ENCODE measurements at regions of chr1 and their contacts with region 1.

Region 1: DNA sequence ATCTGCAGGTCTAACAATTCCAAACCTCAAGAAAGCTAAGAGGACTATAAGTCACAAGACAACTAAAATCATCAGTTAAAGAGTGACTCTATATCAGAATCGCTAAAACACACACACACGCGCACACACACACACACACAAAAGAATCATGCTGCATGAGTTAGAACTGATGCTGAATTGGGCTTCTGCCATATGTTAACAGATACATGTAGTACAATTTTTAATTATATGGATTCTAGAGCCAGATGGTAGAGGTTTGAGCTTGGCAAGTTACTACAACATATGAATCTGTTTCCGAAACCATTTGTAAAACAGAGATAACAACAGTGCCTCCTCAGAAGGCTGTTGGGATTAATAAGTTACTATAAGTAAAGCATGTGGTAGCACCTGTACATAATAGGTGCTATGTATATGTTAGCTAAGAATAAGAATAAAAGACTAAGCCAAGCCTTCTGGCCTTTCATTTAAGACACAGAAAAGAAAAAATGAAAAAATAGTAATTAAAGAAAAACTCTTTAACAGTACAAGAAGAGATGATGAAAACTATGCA is 17.9 kb downstream of the EPRS1 start:
- DNase-seq: no peak
- H3K4me3 ChIP-seq: no peak overlapping the region
- H3K27ac ChIP-seq: no peak overlapping the region
- H3K4me1 ChIP-seq: no peaks in the 10 kb centered on the region
- H3K27me3 ChIP-seq: no peaks in the 10 kb centered on the region
- CTCF ChIP-seq: no peak

Region 2: GRCh38 chr1:219973213-219973612 is 55.2 kb before region 1 on chr1:
- CTCF ChIA-PET with region 1: no interaction called
- POLR2A ChIA-PET with region 1: no interaction called
- intact Hi-C with region 1: loop called (anchors 5 kb)
- DNase-seq: no peak
- H3K4me3 ChIP-seq: no peak overlapping the region
- H3K27ac ChIP-seq: no peak overlapping the region
- H3K4me1 ChIP-seq: no peaks in the 10 kb centered on the region
- H3K27me3 ChIP-seq: no peaks in the 10 kb centered on the region
- CTCF ChIP-seq: no peak

Region 3: DNA sequence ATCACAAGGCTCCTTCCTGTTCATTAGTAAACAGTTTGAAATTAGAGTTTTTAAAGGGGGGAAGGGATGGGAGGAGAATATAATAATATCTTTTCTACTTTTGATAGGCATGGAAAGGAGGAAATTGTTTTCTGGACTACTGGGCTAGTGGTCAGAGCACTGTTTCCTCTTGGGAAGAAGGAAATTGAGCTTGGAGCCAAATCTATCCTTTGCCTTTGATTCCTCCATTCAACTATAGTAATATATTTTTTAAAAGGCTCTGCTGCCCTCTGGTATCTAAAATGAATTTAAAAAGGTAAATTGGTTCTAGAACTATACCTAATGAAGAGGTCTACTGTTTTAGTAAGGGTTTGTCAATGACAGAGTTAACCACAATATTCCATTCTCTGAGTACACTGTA is 71.4 kb after region 1 on chr1:
- CTCF ChIA-PET with region 1: no interaction called
- POLR2A ChIA-PET with region 1: no interaction called
- intact Hi-C with region 1: loop called (anchors 10 kb)
- DNase-seq: no peak
- H3K4me3 ChIP-seq: no peak overlapping the region
- H3K27ac ChIP-seq: no peak overlapping the region
- H3K4me1 ChIP-seq: peaks cover 7% of the 10 kb centered on the region
- H3K27me3 ChIP-seq: no peaks in the 10 kb centered on the region
- CTCF ChIP-seq: no peak

Region 4: DNA sequence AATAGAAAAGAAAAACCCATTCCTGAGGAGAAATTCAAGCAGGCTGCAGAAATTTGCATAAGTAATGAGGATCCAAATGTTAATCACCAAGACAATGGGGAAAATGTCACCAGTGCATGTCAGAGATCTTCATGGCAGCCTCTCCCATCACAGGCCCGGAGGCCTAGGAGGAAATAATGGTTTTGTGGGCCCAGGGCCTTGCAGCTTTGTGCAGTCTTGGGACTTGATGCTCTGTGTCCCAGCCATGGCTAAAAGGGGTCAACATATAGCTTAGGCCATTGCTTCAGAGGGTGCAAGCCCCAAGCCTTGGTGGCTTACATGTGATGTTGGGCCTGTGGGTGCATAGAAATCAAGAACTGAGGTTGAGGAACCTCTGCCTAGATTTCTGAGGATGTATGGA is 221.1 kb after region 1 on chr1:
- CTCF ChIA-PET with region 1: no interaction called
- POLR2A ChIA-PET with region 1: interaction called, 11 read pairs
- intact Hi-C with region 1: no loop called
- DNase-seq: no peak
- H3K4me3 ChIP-seq: no peak overlapping the region
- H3K27ac ChIP-seq: no peak overlapping the region
- H3K4me1 ChIP-seq: no peaks in the 10 kb centered on the region
- H3K27me3 ChIP-seq: no peaks in the 10 kb centered on the region
- CTCF ChIP-seq: no peak